IMR-90 (cell line): ENCODE measurements at regions of chr17 and their contacts with region 1.

Region 1: DNA sequence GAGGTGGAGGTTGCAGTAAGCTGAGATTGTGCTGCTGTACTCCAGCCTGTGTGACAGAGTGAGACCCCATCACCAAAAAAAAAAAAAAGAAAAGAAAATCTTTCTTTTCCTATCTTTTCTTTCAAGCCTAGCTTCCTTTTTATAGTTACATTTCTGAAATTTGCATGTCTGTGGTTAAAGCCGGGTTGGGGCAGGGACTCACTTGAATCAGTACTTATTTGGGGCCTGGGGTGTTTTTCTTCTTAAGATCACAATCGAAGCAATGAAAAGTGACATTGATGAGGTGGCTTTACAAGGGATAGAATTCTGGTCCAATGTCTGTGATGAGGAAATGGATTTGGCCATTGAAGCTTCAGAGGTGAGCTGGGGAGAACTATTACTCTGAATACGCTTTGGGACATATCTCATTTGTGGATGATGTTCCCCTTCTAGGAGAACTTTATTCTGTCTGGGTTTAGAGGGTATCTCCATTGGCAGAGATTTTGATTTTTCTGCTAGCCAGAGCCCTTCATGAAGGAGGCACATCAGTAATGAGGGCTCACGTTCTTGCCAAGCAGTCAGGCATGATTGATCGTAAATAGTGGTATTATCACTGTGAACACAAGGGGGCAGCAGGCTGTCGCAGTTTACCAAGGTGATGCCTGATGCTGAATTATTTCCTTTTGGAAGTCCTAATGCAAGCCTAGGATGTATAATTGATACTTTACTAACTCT is 14.3 kb downstream of the KPNB1 start:
- DNase-seq: peak; percentile 54
- ATAC-seq: peak; percentile 78
- H3K4me3 ChIP-seq: no peak overlapping the region
- H3K27ac ChIP-seq: no peak overlapping the region
- H3K4me1 ChIP-seq: no peaks in the 10 kb centered on the region; the same call in 1 of the 2 replicates
- H3K27me3 ChIP-seq: no peaks in the 10 kb centered on the region
- CTCF ChIP-seq: peak; percentile 68
- POLR2A ChIP-seq: no peak
- RAD21 ChIP-seq: peak; percentile 58

Region 2: DNA sequence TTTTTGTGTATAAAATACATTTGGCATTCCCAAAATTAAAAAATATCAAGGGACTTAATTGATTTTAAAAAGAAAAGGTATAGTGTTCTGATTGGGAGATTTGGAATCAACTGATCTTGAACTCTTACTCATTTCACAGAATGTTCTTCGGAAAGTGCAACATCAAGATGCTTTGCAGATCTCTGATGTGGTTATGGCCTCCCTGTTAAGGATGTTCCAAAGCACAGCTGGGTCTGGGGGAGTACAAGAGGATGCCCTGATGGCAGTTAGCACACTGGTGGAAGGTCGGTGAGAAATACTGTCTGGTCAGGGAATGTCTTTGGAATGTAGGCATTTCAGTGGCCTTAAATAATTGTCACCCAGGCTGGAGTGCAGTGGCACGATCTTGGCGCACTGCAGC is 10.4 kb after region 1 on chr17:
- CTCF ChIA-PET with region 1: interaction called, 10 read pairs
- POLR2A ChIA-PET with region 1: no interaction called
- dilution Hi-C with region 1: no loop called
- in situ Hi-C with region 1: no loop called
- intact Hi-C with region 1: no loop called
- DNase-seq: no peak
- ATAC-seq: no peak
- H3K4me3 ChIP-seq: no peak overlapping the region
- H3K27ac ChIP-seq: no peak overlapping the region
- H3K4me1 ChIP-seq: no peaks in the 10 kb centered on the region
- H3K27me3 ChIP-seq: no peaks in the 10 kb centered on the region
- CTCF ChIP-seq: no peak
- POLR2A ChIP-seq: no peak
- RAD21 ChIP-seq: no peak